Astrocyte of the cerebellum (primary cell): ENCODE measurements at regions of chr10 and their contacts with region 1.

Region 1: GRCh38 chr10:100346765-100347567 is at the start of gene SCD:
- DNase-seq: peak; percentile 70
- H3K4me3 ChIP-seq: peak within 1 kb of the TSS; percentile 88
- CTCF ChIP-seq: no peak

Region 2: GRCh38 chr10:100303724-100304319 is 43.1 kb before region 1 on chr10:
- in situ Hi-C with region 1: no loop called
- DNase-seq: no peak
- H3K4me3 ChIP-seq: no peak overlapping the region
- CTCF ChIP-seq: peak; percentile 66

Region 3: DNA sequence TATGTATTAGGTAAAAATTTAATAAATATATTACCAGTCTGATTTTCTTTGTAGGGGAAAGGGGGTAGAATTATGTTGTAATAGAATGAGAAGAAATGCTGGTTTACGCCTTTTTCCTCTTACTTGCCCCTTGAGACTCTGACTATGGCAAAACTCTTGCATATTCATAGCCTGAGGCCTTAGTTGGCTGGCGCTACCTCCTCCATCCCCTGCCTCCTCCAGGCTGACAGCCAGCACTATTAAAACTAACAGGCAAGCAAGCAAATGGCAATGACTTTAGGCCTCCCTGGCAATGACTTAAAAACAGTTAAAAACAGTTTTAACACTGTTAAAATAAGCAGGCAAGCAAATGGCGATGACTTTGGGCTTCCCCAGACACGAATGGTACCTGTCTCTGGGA is 31.4 kb before region 1 on chr10:
- in situ Hi-C with region 1: no loop called
- DNase-seq: no peak
- H3K4me3 ChIP-seq: no peak overlapping the region
- CTCF ChIP-seq: no peak

Region 4: GRCh38 chr10:100433253-100434240 is 86.6 kb after region 1 on chr10:
- in situ Hi-C with region 1: loop called (anchors 5 kb)
- DNase-seq: peak; percentile 92
- H3K4me3 ChIP-seq: no peak overlapping the region
- CTCF ChIP-seq: peak; percentile 98

Region 5: GRCh38 chr10:100878291-100878910 is 531.4 kb after region 1 on chr10:
- in situ Hi-C with region 1: loop called (anchors 25 kb)
- DNase-seq: peak; percentile 61
- H3K4me3 ChIP-seq: no peak overlapping the region
- CTCF ChIP-seq: peak; percentile 80